ENCODE measurements at regions of chr1 and their contacts with region 1.

Region 1: GRCh38 chr1:175035865-175036264 is 12.6 kb upstream of the MRPS14 start:
- DNase-seq: no peak
- ATAC-seq: no peak
- H3K4me3 ChIP-seq: no peak overlapping the region
- H3K27ac ChIP-seq: no peak overlapping the region
- H3K4me1 ChIP-seq: peaks cover 9% of the 10 kb centered on the region
- H3K27me3 ChIP-seq: no peaks in the 10 kb centered on the region; a peak in 1 of 5 replicates
- CTCF ChIP-seq: no peak
- EP300 ChIP-seq: no peak
- POLR2A ChIP-seq: no peak
- RAD21 ChIP-seq: no peak

Region 2: GRCh38 chr1:175124861-175125260 is 89.0 kb after region 1 on chr1:
- CTCF ChIA-PET with region 1: interaction called, 39 read pairs
- POLR2A ChIA-PET with region 1: no interaction called
- in situ Hi-C with region 1: no loop called
- intact Hi-C with region 1: no loop called
- DNase-seq: no peak
- ATAC-seq: no peak
- H3K4me3 ChIP-seq: no peak overlapping the region
- H3K27ac ChIP-seq: no peak overlapping the region
- H3K4me1 ChIP-seq: no peaks in the 10 kb centered on the region
- H3K27me3 ChIP-seq: no peaks in the 10 kb centered on the region; a peak in 1 of 5 replicates
- CTCF ChIP-seq: no peak
- EP300 ChIP-seq: no peak
- POLR2A ChIP-seq: no peak
- RAD21 ChIP-seq: no peak

Region 3: DNA sequence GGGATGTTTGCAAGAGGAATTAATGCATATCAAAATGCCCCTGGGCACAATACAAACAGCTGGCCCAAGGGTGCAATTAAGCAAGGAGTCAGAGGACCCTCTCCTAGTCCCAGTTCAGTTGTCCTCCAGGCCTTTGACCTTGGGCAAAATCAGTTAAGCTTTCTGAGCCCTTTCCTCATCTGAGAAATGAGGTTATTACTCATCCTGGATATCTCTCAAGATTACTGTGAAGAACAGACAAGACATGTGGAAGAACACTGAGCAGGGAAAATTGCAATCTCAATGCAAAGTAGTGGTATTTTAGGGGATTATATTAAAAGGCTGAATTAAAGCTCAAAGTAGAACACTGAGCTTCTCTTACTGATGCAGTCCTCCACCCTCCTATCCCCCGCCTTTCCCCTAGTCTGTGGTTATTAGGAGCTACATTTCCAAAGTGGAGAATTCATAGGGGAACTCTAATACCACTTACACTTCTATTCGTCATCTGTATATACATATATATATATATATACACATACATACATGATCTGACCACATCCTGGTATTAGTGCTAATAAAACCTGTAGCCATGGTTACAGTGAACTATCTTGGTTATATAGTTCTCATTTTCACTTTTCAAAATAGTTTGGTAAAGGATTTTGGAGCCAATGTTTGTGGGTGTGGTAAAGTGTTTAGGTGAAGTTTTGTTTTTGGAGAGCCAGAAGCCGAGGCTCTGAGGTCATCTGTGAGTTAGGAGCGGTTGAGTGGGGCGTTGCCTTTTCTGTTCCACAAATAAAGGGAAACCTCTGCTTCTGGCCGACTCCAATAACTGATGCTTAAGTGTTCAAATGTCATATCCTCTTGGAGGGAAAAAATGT is 138.7 kb after region 1 on chr1:
- CTCF ChIA-PET with region 1: no interaction called
- POLR2A ChIA-PET with region 1: no interaction called
- in situ Hi-C with region 1: no loop called
- intact Hi-C with region 1: no loop called
- DNase-seq: no peak
- ATAC-seq: no peak
- H3K4me3 ChIP-seq: no peak overlapping the region
- H3K27ac ChIP-seq: no peak overlapping the region
- H3K4me1 ChIP-seq: no peaks in the 10 kb centered on the region
- H3K27me3 ChIP-seq: no peaks in the 10 kb centered on the region
- CTCF ChIP-seq: no peak
- EP300 ChIP-seq: no peak
- POLR2A ChIP-seq: no peak
- RAD21 ChIP-seq: no peak

Region 4: GRCh38 chr1:175319418-175320230 is 283.8 kb after region 1 on chr1:
- CTCF ChIA-PET with region 1: no interaction called
- POLR2A ChIA-PET with region 1: no interaction called
- in situ Hi-C with region 1: no loop called
- intact Hi-C with region 1: no loop called
- DNase-seq: peak; percentile 52
- ATAC-seq: peak; percentile 95
- H3K4me3 ChIP-seq: no peak overlapping the region
- H3K27ac ChIP-seq: no peak overlapping the region
- H3K4me1 ChIP-seq: no peaks in the 10 kb centered on the region
- H3K27me3 ChIP-seq: peaks cover 1 to 7% of the 10 kb centered on the region in 2 experiments; a peak in 2 of 5 replicates
- CTCF ChIP-seq: peak; percentile 89
- EP300 ChIP-seq: no peak
- POLR2A ChIP-seq: no peak
- RAD21 ChIP-seq: peak; percentile 73

Measured in HepG2 (cell line).